ENCODE measurements at regions of chr3 and their contacts with region 1.

Region 1: GRCh38 chr3:62558549-62559112 is 185.3 kb upstream of the FEZF2 start:
- DNase-seq: no peak
- ATAC-seq: no peak
- H3K4me3 ChIP-seq: no peak overlapping the region
- H3K27ac ChIP-seq: no peak overlapping the region
- H3K4me1 ChIP-seq: no peaks in the 10 kb centered on the region
- H3K27me3 ChIP-seq: no peaks in the 10 kb centered on the region
- CTCF ChIP-seq: peak in 5 of 9 donors; percentile 7 to 38 (median 26)

Region 2: DNA sequence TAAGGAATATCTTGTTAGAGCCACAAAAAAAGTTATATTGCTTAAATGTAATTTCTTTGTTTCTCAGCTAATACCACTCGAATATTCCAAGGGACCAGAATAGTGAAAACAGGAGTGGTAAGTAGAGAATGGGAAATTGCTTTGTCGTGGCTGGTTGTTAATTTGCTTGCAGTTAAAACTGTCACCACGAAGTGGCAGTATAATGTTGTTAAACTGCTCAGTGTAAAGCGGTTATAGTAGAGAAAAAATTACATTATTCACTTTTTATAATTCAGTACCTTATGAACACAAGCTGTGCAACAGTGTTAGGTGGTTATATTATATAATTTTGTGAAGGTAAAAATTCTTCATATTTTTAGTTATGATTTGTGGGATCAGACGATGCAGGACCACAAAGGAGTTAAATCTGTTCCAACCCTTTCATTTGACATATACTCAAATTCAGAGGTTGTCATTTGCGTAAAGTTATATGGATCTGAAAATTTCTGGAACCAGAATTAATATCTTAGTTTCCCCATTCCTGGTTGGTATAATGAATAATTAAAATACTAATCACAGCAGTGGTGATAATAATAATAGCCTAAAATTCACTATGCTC is 357.1 kb before region 1 on chr3:
- intact Hi-C with region 1: loop called in 2 of 10 experiments (anchors 10 kb)
- DNase-seq: no peak
- ATAC-seq: peak in 1 of 8 donors; percentile 27
- H3K4me3 ChIP-seq: no peak overlapping the region
- H3K27ac ChIP-seq: no peak overlapping the region
- H3K4me1 ChIP-seq: no peaks in the 10 kb centered on the region
- H3K27me3 ChIP-seq: no peaks in the 10 kb centered on the region
- CTCF ChIP-seq: peak; percentile 24 to 70 (median 58)

Region 3: GRCh38 chr3:62211675-62212429 is 346.8 kb before region 1 on chr3:
- intact Hi-C with region 1: loop called in 3 of 10 experiments (anchors 10 kb)
- DNase-seq: no peak
- ATAC-seq: no peak
- H3K4me3 ChIP-seq: no peak overlapping the region
- H3K27ac ChIP-seq: no peak overlapping the region
- H3K4me1 ChIP-seq: no peaks in the 10 kb centered on the region
- H3K27me3 ChIP-seq: no peaks in the 10 kb centered on the region
- CTCF ChIP-seq: no peak

Region 4: DNA sequence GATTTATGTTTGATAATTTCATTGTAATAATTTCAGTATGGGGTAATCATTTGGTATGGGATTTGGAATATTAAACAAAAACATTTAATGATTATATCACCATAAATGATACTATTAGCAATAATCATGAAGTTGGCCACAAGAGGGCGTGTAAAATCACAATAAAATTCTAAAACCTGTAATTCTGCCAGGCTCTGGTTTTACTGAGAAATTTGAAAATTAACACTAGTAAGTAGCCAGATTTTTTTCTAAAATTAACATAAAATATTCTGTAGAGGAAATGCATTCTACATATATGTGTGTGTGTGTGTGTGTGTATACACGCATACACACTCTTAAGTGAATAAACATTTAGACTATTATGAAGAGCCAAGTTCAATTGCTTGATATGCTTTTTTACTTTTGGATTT is 225.8 kb before region 1 on chr3:
- intact Hi-C with region 1: loop called in 7 of 10 experiments (anchors 2 to 10 kb)
- DNase-seq: no peak
- ATAC-seq: no peak
- H3K4me3 ChIP-seq: no peak overlapping the region
- H3K27ac ChIP-seq: no peak overlapping the region
- H3K4me1 ChIP-seq: no peaks in the 10 kb centered on the region
- H3K27me3 ChIP-seq: no peaks in the 10 kb centered on the region
- CTCF ChIP-seq: peak in 8 of 9 donors; percentile 26 to 68 (median 56)

Region 5: DNA sequence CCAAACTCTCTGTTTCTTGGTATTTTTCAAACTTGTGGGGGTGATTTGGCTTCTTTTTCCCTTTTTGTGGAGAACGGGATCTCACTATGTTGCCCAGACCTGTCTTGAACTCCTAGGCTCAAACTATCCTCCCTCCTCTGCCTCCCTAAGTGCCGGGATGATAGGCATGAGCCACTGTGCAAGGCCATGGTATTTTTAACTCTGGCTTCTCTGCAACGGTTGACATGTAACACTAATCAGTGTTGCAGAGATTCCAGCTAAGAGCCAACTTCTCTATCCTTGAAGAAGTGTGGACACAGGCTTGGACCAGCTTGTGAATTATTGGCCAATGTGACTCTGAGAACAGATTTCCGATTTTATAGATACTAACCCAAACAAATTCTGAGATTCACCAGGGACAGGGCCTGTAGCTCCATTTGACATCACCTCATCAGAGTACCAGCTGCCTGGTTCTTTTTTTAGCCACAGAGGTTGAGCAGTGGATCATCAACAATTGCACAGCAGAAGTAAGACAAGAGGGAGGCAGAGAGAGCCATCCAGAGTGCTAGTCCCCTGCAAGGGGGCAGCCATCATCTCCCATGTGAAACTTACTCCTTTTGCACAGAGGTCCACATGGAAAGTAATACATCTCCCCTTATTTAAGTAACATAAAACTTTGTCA is 621.4 kb after region 1 on chr3:
- intact Hi-C with region 1: no loop called
- DNase-seq: no peak
- ATAC-seq: peak in 6 of 8 donors; percentile 62 to 79 (median 72)
- H3K4me3 ChIP-seq: no peak overlapping the region
- H3K27ac ChIP-seq: no peak overlapping the region
- H3K4me1 ChIP-seq: no peaks in the 10 kb centered on the region
- H3K27me3 ChIP-seq: no peaks in the 10 kb centered on the region
- CTCF ChIP-seq: no peak